ENCODE measurements at regions of chr2 and their contacts with region 1.

Region 1: GRCh38 chr2:207121784-207122183 is 44.0 kb downstream of the KLF7 start:
- DNase-seq: no peak
- ATAC-seq: no peak
- H3K4me3 Mint-ChIP-seq: no peak overlapping the region
- H3K27ac Mint-ChIP-seq: peak overlapping the region; percentile 26
- H3K4me1 Mint-ChIP-seq: peaks cover 60% of the 10 kb centered on the region
- H3K27me3 Mint-ChIP-seq: no peaks in the 10 kb centered on the region

Region 2: GRCh38 chr2:206085742-206086445 is 1035.9 kb before region 1 on chr2 and contains the start of gene INO80D:
- CTCF ChIA-PET with region 1: no interaction called
- POLR2A ChIA-PET with region 1: no interaction called
- intact Hi-C with region 1: no loop called
- DNase-seq: peak; percentile 89
- ATAC-seq: peak; percentile 96
- H3K4me3 Mint-ChIP-seq: peak within 1 kb of the TSS; percentile 96
- H3K27ac Mint-ChIP-seq: peak within 1 kb of the TSS; percentile 99
- H3K4me1 Mint-ChIP-seq: peaks cover 28% of the 10 kb centered on the region
- H3K27me3 Mint-ChIP-seq: no peaks in the 10 kb centered on the region
- total RNA-seq, gene INO80D: 17.6 to 18.9 TPM

Region 3: DNA sequence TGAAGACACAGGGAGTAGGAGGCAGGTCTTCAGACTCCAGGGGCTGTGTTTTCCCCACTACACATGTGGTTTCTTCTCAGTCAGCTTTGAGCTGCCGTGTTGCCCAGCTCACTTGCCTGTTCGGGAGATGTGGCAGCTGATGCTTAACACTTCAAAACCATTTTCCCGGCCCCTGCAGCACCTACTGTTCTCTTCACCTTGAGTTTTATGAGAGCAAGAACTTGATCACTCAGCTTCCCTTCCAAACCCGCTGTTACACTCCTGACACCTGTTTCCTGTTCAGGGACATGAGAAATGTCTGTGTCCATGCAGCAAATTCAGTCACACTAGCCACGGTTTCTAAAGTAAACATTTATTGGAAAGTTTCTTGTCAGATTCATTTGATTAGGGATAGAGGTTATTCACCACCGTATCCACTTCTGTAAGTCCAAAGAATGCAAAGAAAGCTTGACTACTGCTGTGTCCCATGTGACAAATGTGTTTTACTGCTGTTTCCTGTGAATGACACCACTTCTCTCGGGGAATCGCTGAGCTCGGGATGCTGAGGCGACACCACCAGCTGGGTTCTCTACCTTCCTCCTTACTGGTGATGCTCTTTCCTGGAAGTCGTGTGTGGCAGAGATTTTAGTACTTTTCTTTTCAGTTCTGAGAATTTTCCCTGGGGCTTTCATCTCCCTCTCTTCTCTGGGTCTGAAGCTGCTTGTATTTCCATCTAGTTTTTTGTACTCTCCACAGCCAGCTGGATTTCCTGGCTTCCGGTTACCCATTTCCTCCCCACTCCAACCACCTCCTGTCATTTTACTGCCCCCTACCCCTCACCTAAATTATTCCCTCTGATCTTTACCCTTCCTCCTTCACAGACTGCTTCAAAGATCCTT is 47.7 kb before region 1 on chr2:
- CTCF ChIA-PET with region 1: no interaction called
- POLR2A ChIA-PET with region 1: no interaction called
- intact Hi-C with region 1: loop called in 1 of 2 experiments (anchors 5 kb)
- DNase-seq: peak; percentile 61
- ATAC-seq: peak; percentile 80
- H3K4me3 Mint-ChIP-seq: peak overlapping the region; percentile 45
- H3K27ac Mint-ChIP-seq: peak overlapping the region; percentile 87
- H3K4me1 Mint-ChIP-seq: peaks cover 34% of the 10 kb centered on the region
- H3K27me3 Mint-ChIP-seq: peaks cover 5% of the 10 kb centered on the region

Region 4: GRCh38 chr2:207143215-207144172 is 21.7 kb after region 1 on chr2:
- CTCF ChIA-PET with region 1: interaction called, 7 read pairs
- POLR2A ChIA-PET with region 1: no interaction called
- intact Hi-C with region 1: loop called in 1 of 2 experiments (anchors 2 kb)
- DNase-seq: peak; percentile 69
- ATAC-seq: peak; percentile 61
- H3K4me3 Mint-ChIP-seq: peak overlapping the region; percentile 66
- H3K27ac Mint-ChIP-seq: peak overlapping the region; percentile 97
- H3K4me1 Mint-ChIP-seq: peaks cover 66% of the 10 kb centered on the region
- H3K27me3 Mint-ChIP-seq: no peaks in the 10 kb centered on the region

Region 5: GRCh38 chr2:207156451-207157161 is 34.8 kb after region 1 on chr2:
- CTCF ChIA-PET with region 1: interaction called, 5 read pairs
- POLR2A ChIA-PET with region 1: interaction called, 3 read pairs
- intact Hi-C with region 1: loop called in 1 of 2 experiments (anchors 1 kb)
- DNase-seq: peak; percentile 65
- ATAC-seq: peak; percentile 83
- H3K4me3 Mint-ChIP-seq: no peak overlapping the region
- H3K27ac Mint-ChIP-seq: peak overlapping the region; percentile 8
- H3K4me1 Mint-ChIP-seq: peaks cover 79% of the 10 kb centered on the region
- H3K27me3 Mint-ChIP-seq: no peaks in the 10 kb centered on the region

Region 6: GRCh38 chr2:207184348-207184747 is 62.6 kb after region 1 on chr2:
- CTCF ChIA-PET with region 1: no interaction called
- POLR2A ChIA-PET with region 1: no interaction called
- intact Hi-C with region 1: no loop called
- DNase-seq: peak; percentile 6
- ATAC-seq: peak; percentile 72
- H3K4me3 Mint-ChIP-seq: no peak overlapping the region
- H3K27ac Mint-ChIP-seq: no peak overlapping the region
- H3K4me1 Mint-ChIP-seq: peaks cover 7% of the 10 kb centered on the region
- H3K27me3 Mint-ChIP-seq: no peaks in the 10 kb centered on the region

Region 7: GRCh38 chr2:207288628-207289027 is 166.8 kb after region 1 on chr2:
- CTCF ChIA-PET with region 1: no interaction called
- POLR2A ChIA-PET with region 1: no interaction called
- intact Hi-C with region 1: loop called in 1 of 2 experiments (anchors 5 kb)
- DNase-seq: peak; percentile 63
- ATAC-seq: peak; percentile 40
- H3K4me3 Mint-ChIP-seq: no peak overlapping the region
- H3K27ac Mint-ChIP-seq: no peak overlapping the region
- H3K4me1 Mint-ChIP-seq: peaks cover 75% of the 10 kb centered on the region
- H3K27me3 Mint-ChIP-seq: peaks cover 2% of the 10 kb centered on the region

Region 8: GRCh38 chr2:207769597-207770486 is 648.1 kb after region 1 on chr2 and contains the start of gene FZD5:
- CTCF ChIA-PET with region 1: no interaction called
- POLR2A ChIA-PET with region 1: interaction called, 10 read pairs
- intact Hi-C with region 1: no loop called
- DNase-seq: peak; percentile 90
- ATAC-seq: peak; percentile 83
- H3K4me3 Mint-ChIP-seq: peak within 1 kb of the TSS; percentile 79
- H3K27ac Mint-ChIP-seq: no peak within 1 kb of the TSS
- H3K4me1 Mint-ChIP-seq: peaks cover 27% of the 10 kb centered on the region
- H3K27me3 Mint-ChIP-seq: peaks cover 41% of the 10 kb centered on the region
- total RNA-seq, gene FZD5: 1.1 to 1.3 TPM